Right cardiac atrium (tissue), 5 donors: ENCODE measurements at regions of chr1 and their contacts with region 1.

Region 1: GRCh38 chr1:201476670-201477344 is 7.8 kb upstream of the PHLDA3 start:
- DNase-seq: peak in 1 of 3 donors; percentile 21
- ATAC-seq: no peak
- H3K4me3 ChIP-seq: no peak overlapping the region
- H3K27ac ChIP-seq: no peak overlapping the region
- H3K4me1 ChIP-seq: peaks cover under 1% of the 10 kb centered on the region
- H3K27me3 ChIP-seq: no peaks in the 10 kb centered on the region

Region 2: GRCh38 chr1:201436393-201436792 is 40.4 kb before region 1 on chr1:
- intact Hi-C with region 1: loop called in 2 of 4 experiments (anchors 5 kb)
- DNase-seq: no peak
- ATAC-seq: peak; percentile 50 to 54
- H3K4me3 ChIP-seq: no peak overlapping the region
- H3K27ac ChIP-seq: no peak overlapping the region
- H3K4me1 ChIP-seq: peaks cover 3% of the 10 kb centered on the region
- H3K27me3 ChIP-seq: no peaks in the 10 kb centered on the region